Activated CD4-positive, alpha-beta T cell treated with anti-CD3 and anti-CD28 coated beads for 36 hours (primary cell): ENCODE measurements at regions of chr14 and their contacts with region 1.

Region 1: GRCh38 chr14:37587881-37588666 is 7.0 kb downstream of the FOXA1 start:
- DNase-seq: no peak
- ATAC-seq: no peak
- H3K4me3 Mint-ChIP-seq: peak overlapping the region; percentile 5
- H3K27ac Mint-ChIP-seq: no peak overlapping the region
- H3K4me1 Mint-ChIP-seq: peaks cover 2% of the 10 kb centered on the region
- H3K27me3 Mint-ChIP-seq: peaks cover 65% of the 10 kb centered on the region

Region 2: GRCh38 chr14:37369425-37369824 is 218.6 kb before region 1 on chr14:
- CTCF ChIA-PET with region 1: no interaction called
- POLR2A ChIA-PET with region 1: no interaction called
- intact Hi-C with region 1: no loop called
- DNase-seq: no peak
- ATAC-seq: no peak
- H3K4me3 Mint-ChIP-seq: no peak overlapping the region
- H3K27ac Mint-ChIP-seq: no peak overlapping the region
- H3K4me1 Mint-ChIP-seq: no peaks in the 10 kb centered on the region
- H3K27me3 Mint-ChIP-seq: no peaks in the 10 kb centered on the region

Region 3: DNA sequence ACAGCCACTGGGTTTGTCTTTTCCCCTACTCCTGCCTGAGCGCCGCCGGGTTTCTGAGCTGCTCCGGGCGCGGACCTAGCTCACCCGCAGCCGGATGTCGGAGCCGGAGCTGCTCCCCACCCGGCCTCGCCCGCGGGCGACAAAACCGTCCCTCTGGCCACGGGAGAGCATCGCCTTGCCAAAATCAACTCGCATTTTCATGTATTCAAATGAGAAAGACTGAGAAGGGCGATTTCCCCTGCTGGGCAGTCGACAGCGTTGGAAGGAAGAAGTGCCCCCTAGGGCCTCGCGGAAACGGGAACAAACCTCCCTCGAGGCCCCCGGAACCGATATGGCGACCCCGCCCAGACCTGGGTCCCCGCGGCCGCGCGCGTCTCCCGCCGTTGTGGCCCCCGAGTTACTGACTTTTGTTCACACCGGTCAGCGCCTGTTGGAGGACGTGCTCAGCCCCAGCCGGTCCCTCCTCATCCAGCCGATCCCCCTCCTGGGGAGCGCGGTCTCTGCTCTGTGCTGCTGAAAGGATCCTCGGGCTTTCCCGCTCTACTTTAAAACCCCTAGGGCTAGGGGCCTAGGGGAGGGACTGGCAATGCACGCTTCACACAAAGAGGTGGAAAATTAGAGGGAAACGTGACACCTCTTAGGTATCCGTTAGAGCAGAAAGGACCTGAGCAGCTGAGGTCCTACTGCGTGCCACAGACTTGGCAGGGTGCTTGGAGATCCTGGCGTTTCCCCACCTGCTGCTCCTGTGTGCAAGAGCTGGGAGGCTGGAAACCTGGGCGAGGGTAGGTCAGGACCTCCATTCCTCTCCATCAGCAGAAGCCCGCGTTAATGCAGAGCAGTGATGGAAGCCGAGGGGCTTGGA is 11.7 kb after region 1 on chr14:
- CTCF ChIA-PET with region 1: interaction called, 3 read pairs
- POLR2A ChIA-PET with region 1: no interaction called
- intact Hi-C with region 1: loop called in 1 of 2 experiments (anchors 2 kb)
- DNase-seq: no peak
- ATAC-seq: no peak
- H3K4me3 Mint-ChIP-seq: no peak overlapping the region
- H3K27ac Mint-ChIP-seq: no peak overlapping the region
- H3K4me1 Mint-ChIP-seq: peaks cover 28% of the 10 kb centered on the region
- H3K27me3 Mint-ChIP-seq: peaks cover 62% of the 10 kb centered on the region